ENCODE measurements at regions of chrX and their contacts with region 1.

Region 1: GRCh38 chrX:101799387-101799786 is 132.4 kb downstream of the ZMAT1 start:
- DNase-seq: peak; percentile 22 to 87 (median 80)
- ATAC-seq: peak; percentile 100
- H3K4me3 ChIP-seq: no peak overlapping the region
- H3K4me3 Mint-ChIP-seq: peak overlapping the region in 9 of 10 donors; percentile 18 to 77 (median 67)
- H3K27ac ChIP-seq: no peak overlapping the region
- H3K27ac Mint-ChIP-seq: peak overlapping the region in 5 of 9 donors; percentile 12 to 67 (median 59)
- H3K4me1 ChIP-seq: no peaks in the 10 kb centered on the region
- H3K4me1 Mint-ChIP-seq: peaks cover 0 to 16% (median 8%) of the 10 kb centered on the region in 7 donors
- H3K27me3 ChIP-seq: no peaks in the 10 kb centered on the region
- H3K27me3 Mint-ChIP-seq: no peaks in the 10 kb centered on the region

Region 2: DNA sequence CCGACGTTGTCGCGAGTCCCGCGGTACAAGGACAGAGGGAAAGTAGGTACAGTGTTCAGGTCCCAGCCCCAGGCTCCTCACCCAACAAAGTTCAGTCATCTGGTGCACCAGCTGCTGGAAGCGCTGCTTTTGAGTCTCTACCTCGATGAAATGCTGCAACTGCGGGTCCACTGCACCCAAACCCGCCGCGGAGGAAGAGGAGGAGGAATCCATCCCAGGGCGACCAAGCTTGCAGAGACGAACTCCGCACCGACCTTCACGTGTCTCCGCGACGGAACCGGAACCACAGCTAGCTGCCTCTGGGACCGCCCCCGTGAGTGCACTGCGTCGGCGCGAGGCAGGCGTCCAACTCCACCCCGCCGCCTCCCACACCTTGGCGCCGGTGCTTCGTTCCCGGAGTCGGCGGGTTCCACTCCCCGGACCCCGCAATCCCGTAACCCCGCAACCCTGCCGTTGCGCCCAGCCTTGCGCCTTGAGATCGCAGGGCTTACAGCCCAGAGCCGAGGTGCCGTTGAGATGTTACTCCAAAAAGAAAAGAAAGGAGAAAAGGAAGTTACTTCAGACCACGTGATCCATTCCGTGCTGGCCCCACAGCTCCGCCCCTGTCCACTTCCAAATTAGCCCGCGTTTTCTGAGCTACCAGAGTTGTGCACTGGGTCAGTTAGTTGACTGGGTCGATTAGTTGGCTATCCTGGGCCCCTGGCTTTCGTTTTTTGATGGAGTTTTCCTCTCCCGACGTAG is 450.8 kb before region 1 on chrX and contains the start of gene TIMM8A:
- CTCF ChIA-PET with region 1: no interaction called
- POLR2A ChIA-PET with region 1: no interaction called
- intact Hi-C with region 1: loop called in 1 of 2 experiments (anchors 5 kb)
- DNase-seq: peak; percentile 48 to 79 (median 72)
- ATAC-seq: peak; percentile 99
- H3K4me3 ChIP-seq: peak within 1 kb of the TSS; percentile 75
- H3K4me3 Mint-ChIP-seq: peak within 1 kb of the TSS; percentile 84 to 93 (median 91)
- H3K27ac ChIP-seq: peak within 1 kb of the TSS; percentile 91
- H3K27ac Mint-ChIP-seq: peak within 1 kb of the TSS; percentile 80 to 96 (median 91)
- H3K4me1 ChIP-seq: peaks cover 0 to 4% of the 10 kb centered on the region in 2 donors
- H3K4me1 Mint-ChIP-seq: peaks cover 0 to 25% (median 19%) of the 10 kb centered on the region in 7 donors
- H3K27me3 ChIP-seq: no peaks in the 10 kb centered on the region
- H3K27me3 Mint-ChIP-seq: no peaks in the 10 kb centered on the region
- total RNA-seq, gene TIMM8A: 6.7 to 13.6 (median 12.2) TPM

Region 3: DNA sequence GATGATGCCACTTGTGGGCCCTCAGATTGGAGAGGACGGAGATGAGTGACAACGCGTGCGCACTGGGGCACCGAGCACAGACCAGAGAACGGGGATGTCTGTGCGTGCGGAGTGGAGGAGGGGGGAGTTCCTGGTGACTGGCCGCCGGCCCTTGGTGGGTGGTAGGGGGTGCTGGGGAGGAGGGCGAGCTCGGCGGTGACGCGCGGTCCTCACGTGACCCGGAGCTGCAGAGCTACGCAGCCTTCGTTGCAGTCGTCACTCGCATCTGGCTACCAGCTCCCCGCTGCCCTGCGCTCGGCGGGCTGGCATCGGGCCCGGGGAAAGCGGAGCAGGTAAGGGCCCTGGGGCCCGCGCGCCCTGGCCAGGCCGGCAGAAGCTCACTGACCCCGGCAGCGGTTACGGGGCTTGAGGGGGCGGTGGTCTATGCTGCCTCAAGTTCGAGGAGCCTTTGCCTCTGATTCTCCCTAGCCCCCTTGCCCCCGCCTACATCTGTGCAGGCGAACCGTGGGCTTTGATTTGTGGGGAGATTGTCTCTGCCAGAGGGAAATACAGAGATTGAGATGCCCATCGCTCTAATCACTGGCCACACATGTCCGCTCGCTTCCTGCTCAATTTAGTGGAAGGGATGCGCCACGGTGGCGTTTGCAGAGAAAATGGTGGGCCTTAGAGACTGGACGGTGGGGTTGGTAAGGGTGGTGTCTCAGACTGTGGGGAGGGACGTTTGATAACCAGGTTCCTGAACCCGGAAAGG is 314.0 kb before region 1 on chrX and contains the start of gene ARMCX4:
- CTCF ChIA-PET with region 1: no interaction called
- POLR2A ChIA-PET with region 1: no interaction called
- intact Hi-C with region 1: loop called in 1 of 2 experiments (anchors 10 kb)
- DNase-seq: peak; percentile 21 to 61 (median 43)
- ATAC-seq: peak; percentile 91
- H3K4me3 ChIP-seq: peak within 1 kb of the TSS; percentile 64
- H3K4me3 Mint-ChIP-seq: peak within 1 kb of the TSS; percentile 74 to 93 (median 88)
- H3K27ac ChIP-seq: peak within 1 kb of the TSS; percentile 72
- H3K27ac Mint-ChIP-seq: peak within 1 kb of the TSS; percentile 29 to 96 (median 92)
- H3K4me1 ChIP-seq: no peaks in the 10 kb centered on the region
- H3K4me1 Mint-ChIP-seq: peaks cover 0 to 10% (median 9%) of the 10 kb centered on the region in 7 donors
- H3K27me3 ChIP-seq: no peaks in the 10 kb centered on the region
- H3K27me3 Mint-ChIP-seq: peaks cover 0 to 11% (median 0%) of the 10 kb centered on the region in 5 donors
- total RNA-seq, gene ARMCX4: 2.1 to 18.1 (median 14.3) TPM

Region 4: GRCh38 chrX:101617211-101618191 is 181.9 kb before region 1 on chrX and contains the start of gene ARMCX6:
- CTCF ChIA-PET with region 1: interaction called, 3 read pairs
- POLR2A ChIA-PET with region 1: no interaction called
- intact Hi-C with region 1: loop called in 1 of 2 experiments (anchors 5 kb)
- DNase-seq: peak; percentile 39 to 80 (median 63)
- ATAC-seq: peak; percentile 92
- H3K4me3 ChIP-seq: peak within 1 kb of the TSS; percentile 77
- H3K4me3 Mint-ChIP-seq: peak within 1 kb of the TSS; percentile 89 to 97 (median 92)
- H3K27ac ChIP-seq: peak within 1 kb of the TSS; percentile 79
- H3K27ac Mint-ChIP-seq: peak within 1 kb of the TSS; percentile 71 to 97 (median 94)
- H3K4me1 ChIP-seq: peaks cover 4 to 9% of the 10 kb centered on the region in 2 donors
- H3K4me1 Mint-ChIP-seq: peaks cover 0 to 24% (median 15%) of the 10 kb centered on the region in 7 donors
- H3K27me3 ChIP-seq: no peaks in the 10 kb centered on the region
- H3K27me3 Mint-ChIP-seq: no peaks in the 10 kb centered on the region
- total RNA-seq, gene ARMCX6: 27.3 to 42.5 (median 39.9) TPM

Region 5: DNA sequence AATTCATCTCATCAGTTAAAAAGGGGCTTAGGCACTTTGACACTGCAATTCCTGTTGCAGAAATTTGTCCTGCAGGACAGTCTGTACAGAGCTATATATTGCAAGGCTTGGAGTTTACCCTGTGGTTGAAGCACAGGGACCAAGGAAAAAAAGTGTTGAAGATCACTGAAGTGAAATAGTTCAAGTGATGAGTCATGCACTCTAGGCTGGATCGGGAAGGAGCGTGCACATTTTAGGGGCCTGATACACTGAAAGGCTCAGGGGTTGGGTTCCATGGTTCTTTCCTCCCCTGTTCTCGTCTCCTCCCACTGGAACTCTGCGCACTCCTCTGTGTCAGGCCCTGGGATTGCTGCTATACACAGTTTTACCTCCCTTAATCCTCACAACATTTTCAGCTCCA is 34.8 kb before region 1 on chrX:
- CTCF ChIA-PET with region 1: no interaction called
- POLR2A ChIA-PET with region 1: no interaction called
- intact Hi-C with region 1: loop called in 1 of 2 experiments (anchors 5 kb)
- DNase-seq: no peak
- ATAC-seq: no peak
- H3K4me3 ChIP-seq: no peak overlapping the region
- H3K4me3 Mint-ChIP-seq: no peak overlapping the region
- H3K27ac ChIP-seq: no peak overlapping the region
- H3K27ac Mint-ChIP-seq: no peak overlapping the region
- H3K4me1 ChIP-seq: no peaks in the 10 kb centered on the region
- H3K4me1 Mint-ChIP-seq: no peaks in the 10 kb centered on the region
- H3K27me3 ChIP-seq: no peaks in the 10 kb centered on the region
- H3K27me3 Mint-ChIP-seq: peaks cover 0 to 2% (median 0%) of the 10 kb centered on the region in 5 donors

Measured in naive thymus-derived CD4-positive, alpha-beta T cell (primary cell).